Mammary epithelial cell (primary cell): ENCODE measurements at regions of chr10 and their contacts with region 1.

Region 1: GRCh38 chr10:70221030-70221429 is 12.2 kb downstream of the PPA1 start:
- DNase-seq: no peak
- H3K4me3 ChIP-seq: no peak overlapping the region
- H3K27ac ChIP-seq: peak overlapping the region; percentile 42
- H3K4me1 ChIP-seq: peaks cover 22% of the 10 kb centered on the region
- H3K27me3 ChIP-seq: no peaks in the 10 kb centered on the region
- CTCF ChIP-seq: no peak

Region 2: DNA sequence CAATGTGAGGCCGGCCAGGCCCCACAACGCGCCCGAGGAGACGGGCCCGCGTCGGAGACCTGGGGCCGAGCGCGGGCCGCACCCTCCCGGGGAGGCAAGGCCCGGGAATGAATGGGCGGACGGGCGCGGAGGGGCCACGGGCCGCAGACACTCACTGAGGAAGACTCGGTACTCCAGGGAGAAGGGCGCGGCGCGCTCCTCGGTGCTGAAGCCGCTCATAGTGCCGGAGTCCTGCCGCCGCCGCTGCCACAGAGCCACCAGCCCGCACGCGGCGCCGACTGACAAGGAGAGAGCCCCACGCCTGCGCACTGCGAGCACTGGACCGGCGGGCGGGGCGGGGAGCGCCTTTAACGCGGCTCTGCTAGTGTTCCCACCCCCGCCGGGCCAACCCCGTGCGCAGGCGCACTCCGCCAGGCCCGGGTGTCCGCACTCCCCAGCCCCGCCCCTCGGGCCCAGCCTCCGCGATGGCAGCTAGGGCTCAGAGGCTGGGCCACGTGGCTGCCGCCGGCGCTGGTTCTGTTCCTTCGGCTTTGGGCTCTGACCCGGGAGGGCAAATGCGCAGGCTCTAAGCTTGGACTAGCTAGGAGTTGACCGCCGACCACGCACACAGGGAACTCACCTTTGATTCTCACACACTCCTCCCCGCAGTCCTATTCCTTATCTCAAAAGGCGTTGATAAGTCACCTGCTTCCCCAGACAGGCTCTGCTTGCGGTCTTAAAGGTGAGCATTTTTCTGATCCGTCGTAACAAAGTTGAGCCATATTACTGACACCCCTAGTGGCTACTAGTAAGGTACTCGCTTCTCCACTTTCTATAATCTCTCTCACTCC is 12.3 kb after region 1 on chr10 and contains the start of gene PPA1:
- CTCF ChIA-PET with region 1: no interaction called
- dilution Hi-C with region 1: no loop called
- in situ Hi-C with region 1: no loop called
- intact Hi-C with region 1: loop called (anchors 1 kb)
- DNase-seq: peak; percentile 95
- H3K4me3 ChIP-seq: peak within 1 kb of the TSS; percentile 64 to 94 (median 77)
- H3K27ac ChIP-seq: peak within 1 kb of the TSS; percentile 84
- H3K4me1 ChIP-seq: peaks cover 14% of the 10 kb centered on the region
- H3K27me3 ChIP-seq: no peaks in the 10 kb centered on the region
- CTCF ChIP-seq: peak; percentile 21 to 31
- total RNA-seq, gene PPA1: 170 to 218 TPM

Region 3: DNA sequence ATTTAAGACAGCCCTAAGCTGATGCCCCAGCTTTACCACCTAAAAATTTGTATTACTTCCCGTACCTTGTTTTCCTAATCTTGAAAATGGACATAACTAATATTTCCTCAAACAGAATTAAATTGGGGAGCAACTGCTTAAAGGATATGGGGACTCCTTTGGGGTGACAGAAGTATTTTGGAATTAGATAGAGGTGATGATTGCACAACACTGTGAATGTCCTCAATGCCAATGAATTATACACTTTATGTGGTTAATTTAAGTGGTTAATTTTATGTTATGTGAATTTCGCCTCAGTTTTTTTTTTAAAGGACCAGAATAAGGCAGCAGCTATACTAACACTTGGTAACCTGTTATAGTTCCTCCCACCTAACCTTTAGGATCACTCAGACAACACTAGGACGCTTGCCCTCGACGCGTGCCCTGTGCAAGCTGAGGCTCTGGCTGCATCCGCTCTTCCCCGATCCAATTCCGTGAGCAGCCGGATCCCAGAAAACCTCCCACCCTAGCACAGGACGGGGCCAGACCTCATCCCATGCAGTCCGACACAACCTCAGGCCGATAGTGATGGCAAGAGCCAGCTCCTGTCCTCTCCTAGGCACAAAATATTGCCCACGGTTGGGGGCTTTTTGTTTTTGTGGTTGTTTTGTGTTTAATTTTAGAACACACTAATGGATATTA is 82.8 kb after region 1 on chr10:
- CTCF ChIA-PET with region 1: no interaction called
- dilution Hi-C with region 1: no loop called
- in situ Hi-C with region 1: no loop called
- intact Hi-C with region 1: loop called (anchors 1 kb)
- DNase-seq: no peak
- H3K4me3 ChIP-seq: no peak overlapping the region
- H3K27ac ChIP-seq: no peak overlapping the region
- H3K4me1 ChIP-seq: no peaks in the 10 kb centered on the region
- H3K27me3 ChIP-seq: no peaks in the 10 kb centered on the region
- CTCF ChIP-seq: no peak

Region 4: GRCh38 chr10:70348228-70348850 is 127.3 kb after region 1 on chr10:
- CTCF ChIA-PET with region 1: interaction called, 5 read pairs
- dilution Hi-C with region 1: no loop called
- in situ Hi-C with region 1: no loop called
- intact Hi-C with region 1: loop called (anchors 1 kb)
- DNase-seq: peak; percentile 32
- H3K4me3 ChIP-seq: no peak overlapping the region
- H3K27ac ChIP-seq: no peak overlapping the region
- H3K4me1 ChIP-seq: no peaks in the 10 kb centered on the region
- H3K27me3 ChIP-seq: no peaks in the 10 kb centered on the region
- CTCF ChIP-seq: peak; percentile 60 to 76

Region 5: DNA sequence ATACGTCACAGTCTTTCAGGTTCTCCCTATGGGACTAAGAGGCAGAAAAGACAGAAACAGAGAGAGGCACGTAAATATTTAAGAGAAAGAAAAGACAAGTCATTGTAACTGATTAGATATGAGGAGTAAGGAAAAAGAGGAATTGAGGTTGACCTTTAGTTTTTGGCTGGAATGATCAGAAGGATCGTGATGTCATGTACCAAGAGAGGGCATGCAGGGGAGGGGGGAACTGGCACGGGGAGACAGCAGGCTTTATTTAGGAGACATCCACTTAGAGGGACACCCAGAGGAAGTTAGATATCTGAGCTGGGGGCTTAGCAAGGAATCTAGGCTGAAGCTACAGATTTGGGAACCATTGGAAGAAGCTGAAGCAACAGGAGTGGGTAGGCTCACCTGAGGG is 170.6 kb after region 1 on chr10:
- CTCF ChIA-PET with region 1: interaction called, 8 read pairs
- dilution Hi-C with region 1: no loop called
- in situ Hi-C with region 1: no loop called
- intact Hi-C with region 1: loop called (anchors 1 kb)
- DNase-seq: no peak
- H3K4me3 ChIP-seq: no peak overlapping the region
- H3K27ac ChIP-seq: no peak overlapping the region
- H3K4me1 ChIP-seq: peaks cover 6% of the 10 kb centered on the region
- H3K27me3 ChIP-seq: no peaks in the 10 kb centered on the region
- CTCF ChIP-seq: no peak